Head of caudate nucleus (tissue), 42 donors: ENCODE measurements at regions of chr7 and their contacts with region 1.

Region 1: DNA sequence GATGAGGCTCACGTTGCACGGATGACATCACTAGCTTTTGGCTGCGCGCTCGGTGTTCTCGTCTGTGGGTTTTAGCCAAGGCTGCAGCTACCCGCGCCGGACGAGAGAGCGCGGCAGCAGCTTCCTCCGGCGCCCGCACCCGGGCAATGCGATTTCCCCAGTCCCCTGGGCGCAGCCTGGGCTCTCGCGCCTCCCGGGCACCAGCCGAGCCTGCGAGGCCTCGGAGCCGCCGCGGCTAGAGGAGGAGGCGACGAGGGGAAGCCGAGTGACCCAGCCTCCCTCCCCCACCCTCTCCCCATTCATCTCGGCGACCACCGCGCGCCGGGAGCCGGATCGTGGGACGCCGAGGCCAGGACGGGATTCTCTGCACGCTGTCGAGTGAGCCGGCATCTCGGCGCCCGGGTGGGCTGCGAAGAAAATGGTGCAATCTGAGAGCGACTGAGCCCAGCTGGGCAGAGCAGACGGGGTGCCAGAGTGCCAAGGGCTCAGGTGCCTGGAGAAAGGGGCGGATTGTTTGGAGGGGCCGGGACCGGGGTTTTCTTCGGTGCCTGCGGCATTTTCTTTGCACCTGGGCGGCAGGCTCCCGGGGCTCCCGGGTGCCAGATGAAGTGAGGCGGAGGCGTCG is 1.2 kb upstream of the TMEM178B start:
- DNase-seq: peak; percentile 69 to 95 (median 84)

Region 2: GRCh38 chr7:141231018-141231792 is 158.5 kb after region 1 on chr7:
- intact Hi-C with region 1: loop called (anchors 5 kb)
- DNase-seq: peak in 40 of 42 donors; percentile 14 to 75 (median 46)